Cardiac septum (tissue), 1 donor: ENCODE measurements at regions of chr19 and their contacts with region 1.

Region 1: DNA sequence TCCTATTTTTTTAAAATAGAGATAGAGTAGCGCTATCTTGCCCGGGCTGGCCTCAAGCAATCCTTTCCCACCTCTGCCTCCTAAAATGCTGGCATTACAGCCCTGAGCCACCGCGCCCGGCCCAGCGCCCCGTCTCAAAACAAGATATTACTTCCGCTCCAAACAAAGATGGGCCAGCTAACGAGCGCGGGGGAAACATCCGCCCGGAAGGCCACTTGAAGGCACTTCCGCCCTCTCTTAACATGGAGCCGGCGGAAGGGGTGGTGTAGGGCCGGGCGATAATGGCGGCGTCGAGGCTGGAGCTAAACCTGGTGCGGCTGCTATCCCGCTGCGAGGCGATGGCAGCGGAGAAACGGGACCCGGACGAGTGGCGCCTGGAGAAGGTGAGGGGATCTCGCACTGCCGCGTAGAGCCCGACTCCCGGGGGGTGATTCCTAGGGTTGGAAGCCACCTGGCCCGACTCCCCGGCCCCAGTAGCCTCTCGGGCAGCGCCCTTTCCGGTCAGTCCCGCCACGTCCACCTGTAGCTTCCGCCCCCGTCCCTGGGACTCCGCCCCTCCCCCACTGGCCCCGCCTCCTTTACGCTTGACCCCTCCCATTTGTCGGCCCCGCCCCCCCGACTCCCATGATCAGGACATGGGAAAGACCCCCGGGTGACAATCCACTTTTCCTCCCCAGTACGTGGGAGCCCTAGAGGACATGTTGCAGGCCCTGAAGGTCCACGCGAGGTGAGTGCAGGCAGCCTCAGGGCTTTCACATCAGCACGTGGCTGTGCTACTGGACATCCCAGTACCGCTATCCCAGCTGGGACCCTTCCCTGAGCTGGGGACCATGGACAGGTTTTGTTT is at the start of gene USE1:
- DNase-seq: peak; percentile 96
- total RNA-seq, gene USE1: 29.1 TPM

Region 2: GRCh38 chr19:17266975-17267788 is 51.8 kb after region 1 on chr19 and contains the start of gene BABAM1:
- intact Hi-C with region 1: loop called (anchors 2 kb)
- DNase-seq: peak; percentile 97
- total RNA-seq, gene BABAM1: 70.5 TPM

Region 3: DNA sequence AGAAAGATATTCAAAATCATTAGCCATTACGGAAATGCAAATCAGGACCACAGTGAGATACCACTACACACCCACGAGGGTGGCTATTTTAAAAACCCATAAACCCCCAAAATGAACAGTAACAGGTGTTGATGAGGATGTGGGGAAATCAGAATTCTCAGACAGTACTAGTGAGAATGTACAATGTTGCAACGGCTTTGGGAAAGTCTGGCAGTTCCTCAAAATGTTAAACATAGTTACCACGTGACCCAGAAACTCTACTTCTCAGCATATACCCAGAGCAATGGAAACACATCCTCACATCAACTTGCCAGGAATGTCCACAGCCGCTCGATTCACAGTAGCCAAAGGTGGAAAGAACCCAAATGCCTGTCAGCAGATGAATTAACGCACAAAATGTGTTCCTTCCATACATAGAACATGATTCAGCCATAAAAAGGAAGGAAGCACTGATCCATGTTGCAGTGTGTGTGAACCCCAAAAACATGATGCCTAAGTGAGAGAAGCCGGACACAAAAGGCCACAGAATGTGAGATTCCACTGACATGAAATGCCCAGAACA is 154.8 kb after region 1 on chr19:
- intact Hi-C with region 1: no loop called
- DNase-seq: no peak